Uterus (tissue), 4 donors: ENCODE measurements at regions of chr6 and their contacts with region 1.

Region 1: DNA sequence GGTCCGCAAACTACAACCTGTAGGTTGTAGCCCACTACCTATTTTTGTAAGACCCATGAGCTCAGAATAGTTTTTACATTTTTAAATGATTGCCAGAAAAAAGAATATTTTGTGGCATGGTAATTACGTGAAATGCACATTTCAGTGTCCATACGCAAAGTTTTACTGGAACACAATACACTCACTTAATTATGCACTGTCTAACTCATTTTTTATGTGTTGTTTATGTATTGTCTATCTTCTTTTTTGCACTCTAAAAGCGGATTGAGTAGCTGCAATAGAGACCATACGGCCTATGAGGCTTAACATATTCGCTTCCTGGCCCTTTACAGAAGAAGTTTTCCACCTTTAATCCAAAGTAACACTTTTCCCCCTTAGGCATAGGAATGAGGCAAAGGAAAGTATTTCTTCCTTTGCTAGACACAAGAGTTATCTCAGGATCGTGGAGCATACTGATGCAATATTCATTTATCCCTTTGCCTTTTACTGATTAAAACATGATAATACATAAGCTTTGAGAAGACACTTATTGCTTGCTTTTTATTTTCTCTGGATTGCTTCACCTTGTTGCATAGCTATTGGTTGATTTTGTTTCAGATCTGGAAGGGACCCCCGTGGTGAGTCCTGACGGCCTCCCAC is 69.8 kb downstream of the FNDC1 start:
- DNase-seq: no peak
- H3K4me3 ChIP-seq: no peak overlapping the region
- H3K27ac ChIP-seq: no peak overlapping the region
- H3K4me1 ChIP-seq: no peaks in the 10 kb centered on the region
- H3K27me3 ChIP-seq: no peaks in the 10 kb centered on the region
- CTCF ChIP-seq: no peak
- POLR2A ChIP-seq: no peak

Region 2: GRCh38 chr6:158999666-159000403 is 239.2 kb before region 1 on chr6 and contains the start of gene RSPH3:
- intact Hi-C with region 1: no loop called
- DNase-seq: peak; percentile 87 to 92
- H3K4me3 ChIP-seq: peak within 1 kb of the TSS; percentile 62 to 83
- H3K27ac ChIP-seq: peak within 1 kb of the TSS; percentile 82 to 85
- H3K4me1 ChIP-seq: no peaks in the 10 kb centered on the region
- H3K27me3 ChIP-seq: no peaks in the 10 kb centered on the region
- CTCF ChIP-seq: peak; percentile 28 to 42 (median 34)
- POLR2A ChIP-seq: peak in 1 of 2 donors; percentile 72
- total RNA-seq, gene RSPH3: 1.2 to 9.5 (median 6.1) TPM

Region 3: GRCh38 chr6:159203304-159204005 is 35.6 kb before region 1 on chr6:
- intact Hi-C with region 1: loop called (anchors 1 kb)
- DNase-seq: peak in 1 of 2 donors; percentile 24
- H3K4me3 ChIP-seq: no peak overlapping the region
- H3K27ac ChIP-seq: no peak overlapping the region
- H3K4me1 ChIP-seq: no peaks in the 10 kb centered on the region
- H3K27me3 ChIP-seq: no peaks in the 10 kb centered on the region
- CTCF ChIP-seq: no peak
- POLR2A ChIP-seq: no peak